PC-3 (cell line): ENCODE measurements at regions of chr17 and their contacts with region 1.

Region 1: GRCh38 chr17:76671123-76671911 is 27.8 kb upstream of the ST6GALNAC1 start:
- DNase-seq: peak; percentile 100
- ATAC-seq: peak; percentile 99
- H3K4me3 ChIP-seq: peak overlapping the region; percentile 72
- H3K27ac ChIP-seq: no peak overlapping the region
- H3K4me1 ChIP-seq: peaks cover 14% of the 10 kb centered on the region
- H3K27me3 ChIP-seq: no peaks in the 10 kb centered on the region
- CTCF ChIP-seq: no peak

Region 2: GRCh38 chr17:76240461-76241203 is 430.7 kb before region 1 on chr17 and contains the start of gene RNF157:
- CTCF ChIA-PET with region 1: no interaction called
- POLR2A ChIA-PET with region 1: no interaction called
- intact Hi-C with region 1: no loop called
- DNase-seq: peak; percentile 71
- ATAC-seq: peak; percentile 90
- H3K4me3 ChIP-seq: peak within 1 kb of the TSS; percentile 75
- H3K27ac ChIP-seq: no peak within 1 kb of the TSS
- H3K4me1 ChIP-seq: peaks cover 16% of the 10 kb centered on the region; the same call in 1 of the 2 replicates
- H3K27me3 ChIP-seq: no peaks in the 10 kb centered on the region
- CTCF ChIP-seq: no peak
- total RNA-seq, gene RNF157: 7.3 and 7.4 TPM in 2 replicates

Region 3: GRCh38 chr17:76681222-76682137 is 10.2 kb after region 1 on chr17:
- CTCF ChIA-PET with region 1: interaction called, 12 read pairs
- POLR2A ChIA-PET with region 1: no interaction called
- intact Hi-C with region 1: no loop called
- DNase-seq: peak; percentile 83
- ATAC-seq: peak; percentile 86
- H3K4me3 ChIP-seq: no peak overlapping the region
- H3K27ac ChIP-seq: no peak overlapping the region
- H3K4me1 ChIP-seq: no peaks in the 10 kb centered on the region
- H3K27me3 ChIP-seq: no peaks in the 10 kb centered on the region
- CTCF ChIP-seq: peak; percentile 96

Region 4: DNA sequence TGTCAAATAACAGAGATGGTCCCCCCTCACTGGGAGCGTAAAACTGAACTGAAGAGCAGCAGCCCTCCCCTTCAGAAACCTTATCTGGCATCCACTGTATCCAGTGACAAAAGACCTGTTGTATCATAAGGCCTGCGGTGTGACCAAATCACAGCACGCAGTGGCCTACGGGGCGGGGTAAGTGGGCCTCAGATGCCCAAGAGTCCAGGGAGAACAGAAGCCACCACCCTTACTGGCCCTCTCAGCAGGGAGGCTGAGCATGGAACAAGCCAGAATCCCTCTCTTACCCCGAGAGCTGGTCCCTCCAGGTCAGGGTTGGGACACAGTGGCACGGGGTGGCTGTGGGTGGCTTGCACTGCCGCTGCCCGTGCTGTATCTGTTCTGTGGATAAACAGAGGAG is 49.7 kb after region 1 on chr17:
- CTCF ChIA-PET with region 1: no interaction called
- POLR2A ChIA-PET with region 1: no interaction called
- intact Hi-C with region 1: no loop called
- DNase-seq: no peak
- ATAC-seq: no peak
- H3K4me3 ChIP-seq: no peak overlapping the region
- H3K27ac ChIP-seq: no peak overlapping the region
- H3K4me1 ChIP-seq: peaks cover 8% of the 10 kb centered on the region
- H3K27me3 ChIP-seq: no peaks in the 10 kb centered on the region
- CTCF ChIP-seq: no peak